A549 (cell line): ENCODE measurements at regions of chr9 and their contacts with region 1.

Region 1: GRCh38 chr9:114587385-114588202 is at the start of gene ATP6V1G1:
- DNase-seq: peak; percentile 98 to 99
- ATAC-seq: peak; percentile 99
- H3K4me3 ChIP-seq: peak within 1 kb of the TSS; percentile 95
- H3K27ac ChIP-seq: peak within 1 kb of the TSS; percentile 87 to 95
- H3K4me1 ChIP-seq: peaks cover 28% of the 10 kb centered on the region; the same call in 2 of the 3 replicates
- CTCF ChIP-seq: no peak
- EP300 ChIP-seq: no peak
- POLR2A ChIP-seq: peak; percentile 88
- RAD21 ChIP-seq: peak; percentile 10 to 19; a peak in 2 of 5 replicates
- polyA plus RNA-seq, gene ATP6V1G1: 143 and 168 TPM in 2 replicates

Region 2: GRCh38 chr9:114505187-114506081 is 82.2 kb before region 1 on chr9 and contains the start of gene WHRN:
- CTCF ChIA-PET with region 1: interaction called, 6 read pairs
- POLR2A ChIA-PET with region 1: interaction called, 45 read pairs
- DNase-seq: peak; percentile 84 to 96
- ATAC-seq: peak; percentile 80 to 86
- H3K4me3 ChIP-seq: peak within 1 kb of the TSS; percentile 77
- H3K27ac ChIP-seq: peak within 1 kb of the TSS; percentile 65 to 88
- H3K4me1 ChIP-seq: peaks cover 27% of the 10 kb centered on the region
- CTCF ChIP-seq: no peak
- EP300 ChIP-seq: no peak
- POLR2A ChIP-seq: peak; percentile 47
- RAD21 ChIP-seq: 0 out of 5 replicates have a peak, but pooled peaks of 1 of the 2 experiments have one; percentile 10
- polyA plus RNA-seq, gene WHRN: 1.2 and 1.5 TPM in 2 replicates

Region 3: GRCh38 chr9:114518599-114519022 is 69.0 kb before region 1 on chr9:
- CTCF ChIA-PET with region 1: interaction called, 3 read pairs
- POLR2A ChIA-PET with region 1: interaction called, 13 read pairs
- DNase-seq: no peak
- ATAC-seq: no peak
- H3K4me3 ChIP-seq: no peak overlapping the region
- H3K27ac ChIP-seq: no peak overlapping the region
- H3K4me1 ChIP-seq: 0 out of 3 replicates have a peak, but pooled peaks cover 4% of the 10 kb centered on the region
- CTCF ChIP-seq: no peak
- EP300 ChIP-seq: no peak
- POLR2A ChIP-seq: no peak
- RAD21 ChIP-seq: no peak

Region 4: GRCh38 chr9:114546851-114547250 is 40.7 kb before region 1 on chr9:
- CTCF ChIA-PET with region 1: no interaction called
- POLR2A ChIA-PET with region 1: interaction called, 46 read pairs
- DNase-seq: no peak
- ATAC-seq: no peak
- H3K4me3 ChIP-seq: no peak overlapping the region
- H3K27ac ChIP-seq: no peak overlapping the region
- H3K4me1 ChIP-seq: peaks cover 7% of the 10 kb centered on the region
- CTCF ChIP-seq: no peak
- EP300 ChIP-seq: no peak
- POLR2A ChIP-seq: no peak
- RAD21 ChIP-seq: no peak

Region 5: GRCh38 chr9:114574438-114574837 is 13.2 kb before region 1 on chr9:
- CTCF ChIA-PET with region 1: interaction called, 7 read pairs
- POLR2A ChIA-PET with region 1: interaction called, 21 read pairs
- DNase-seq: no peak
- ATAC-seq: no peak
- H3K4me3 ChIP-seq: no peak overlapping the region
- H3K27ac ChIP-seq: no peak overlapping the region
- H3K4me1 ChIP-seq: no peaks in the 10 kb centered on the region
- CTCF ChIP-seq: no peak
- EP300 ChIP-seq: no peak
- POLR2A ChIP-seq: no peak
- RAD21 ChIP-seq: no peak

Region 6: DNA sequence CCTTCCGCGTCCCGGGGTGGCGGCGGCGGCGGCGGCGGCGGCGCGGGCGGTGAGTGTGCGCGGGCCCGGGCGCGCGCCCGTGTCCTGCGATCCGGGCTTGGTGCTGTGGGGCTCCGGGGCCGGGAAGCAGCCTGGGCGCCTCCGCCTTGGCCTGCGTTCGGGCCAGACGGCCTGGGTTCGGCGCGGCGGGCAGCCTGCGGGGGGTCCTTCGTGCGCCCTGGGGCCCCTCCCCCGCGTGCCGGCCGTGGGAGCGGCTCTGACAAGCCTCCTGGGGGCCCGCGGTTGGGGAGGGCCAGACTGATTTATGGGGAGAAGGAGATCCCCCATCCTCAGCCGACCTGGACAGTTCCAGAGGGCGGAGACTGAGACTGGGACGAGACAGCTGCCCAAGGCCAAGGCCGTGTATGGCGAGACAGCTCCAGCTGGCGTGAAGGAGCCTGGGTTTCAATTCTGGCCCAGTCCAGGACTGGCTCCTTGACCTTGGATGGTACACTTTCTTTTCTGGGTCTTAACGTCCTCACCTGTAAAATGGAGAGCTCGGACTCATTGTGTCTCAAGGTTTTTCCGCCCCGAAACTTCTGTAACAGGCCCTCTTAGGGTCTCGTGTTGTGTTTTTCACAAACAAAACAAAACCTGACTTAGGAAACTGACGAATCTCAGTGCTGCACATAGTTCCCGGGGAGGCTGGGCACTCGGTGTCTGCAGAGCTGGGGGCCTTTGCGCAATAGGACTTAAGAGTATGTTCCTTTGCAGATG is 24.1 kb after region 1 on chr9:
- CTCF ChIA-PET with region 1: interaction called, 4 read pairs
- POLR2A ChIA-PET with region 1: interaction called, 20 read pairs
- DNase-seq: peak; percentile 50 to 63
- ATAC-seq: peak; percentile 81 to 88
- H3K4me3 ChIP-seq: peak overlapping the region; percentile 65
- H3K27ac ChIP-seq: peak overlapping the region; percentile 89 to 98
- H3K4me1 ChIP-seq: peaks cover 24% of the 10 kb centered on the region
- CTCF ChIP-seq: no peak
- EP300 ChIP-seq: no peak
- POLR2A ChIP-seq: no peak; the same call in 1 of the 2 replicates
- RAD21 ChIP-seq: no peak

Region 7: GRCh38 chr9:114662081-114662989 is 74.7 kb after region 1 on chr9:
- CTCF ChIA-PET with region 1: no interaction called
- POLR2A ChIA-PET with region 1: no interaction called
- DNase-seq: peak; percentile 33 to 92
- ATAC-seq: peak; percentile 86 to 97
- H3K4me3 ChIP-seq: no peak overlapping the region
- H3K27ac ChIP-seq: peak overlapping the region; percentile 10 to 40; a peak in 4 of 6 replicates
- H3K4me1 ChIP-seq: no peaks in the 10 kb centered on the region
- CTCF ChIP-seq: peak; percentile 88
- EP300 ChIP-seq: no peak
- POLR2A ChIP-seq: no peak
- RAD21 ChIP-seq: peak; percentile 94

Region 8: GRCh38 chr9:114805670-114806525 is 218.3 kb after region 1 on chr9 and contains the start of gene TNFSF15:
- CTCF ChIA-PET with region 1: no interaction called
- POLR2A ChIA-PET with region 1: no interaction called
- DNase-seq: peak in 1 of 2 experiments; percentile 40
- ATAC-seq: peak; percentile 57 to 70; a peak in 4 of 6 replicates
- H3K4me3 ChIP-seq: peak within 1 kb of the TSS; percentile 22; the same call in 1 of the 3 replicates
- H3K27ac ChIP-seq: peak within 1 kb of the TSS; percentile 66 to 85
- H3K4me1 ChIP-seq: peaks cover 49% of the 10 kb centered on the region
- CTCF ChIP-seq: no peak
- EP300 ChIP-seq: no peak
- POLR2A ChIP-seq: peak; percentile 13; the same call in 1 of the 2 replicates
- RAD21 ChIP-seq: no peak
- polyA plus RNA-seq, gene TNFSF15: 5.6 and 6.8 TPM in 2 replicates